ENCODE measurements at regions of chr12 and their contacts with region 1.

Region 1: GRCh38 chr12:132908145-132909044 is 21.0 kb upstream of the CHFR start:
- DNase-seq: peak; percentile 98
- ATAC-seq: peak; percentile 97
- H3K4me3 ChIP-seq: peak overlapping the region; percentile 22 to 49
- H3K27ac ChIP-seq: peak overlapping the region in 1 of 2 donors; percentile 6
- H3K4me1 ChIP-seq: no peaks in the 10 kb centered on the region
- H3K27me3 ChIP-seq: no peaks in the 10 kb centered on the region

Region 2: GRCh38 chr12:131028615-131029338 is 1879.6 kb before region 1 on chr12:
- intact Hi-C with region 1: no loop called
- DNase-seq: no peak
- ATAC-seq: no peak
- H3K4me3 ChIP-seq: no peak overlapping the region
- H3K27ac ChIP-seq: no peak overlapping the region
- H3K4me1 ChIP-seq: no peaks in the 10 kb centered on the region
- H3K27me3 ChIP-seq: no peaks in the 10 kb centered on the region

Region 3: DNA sequence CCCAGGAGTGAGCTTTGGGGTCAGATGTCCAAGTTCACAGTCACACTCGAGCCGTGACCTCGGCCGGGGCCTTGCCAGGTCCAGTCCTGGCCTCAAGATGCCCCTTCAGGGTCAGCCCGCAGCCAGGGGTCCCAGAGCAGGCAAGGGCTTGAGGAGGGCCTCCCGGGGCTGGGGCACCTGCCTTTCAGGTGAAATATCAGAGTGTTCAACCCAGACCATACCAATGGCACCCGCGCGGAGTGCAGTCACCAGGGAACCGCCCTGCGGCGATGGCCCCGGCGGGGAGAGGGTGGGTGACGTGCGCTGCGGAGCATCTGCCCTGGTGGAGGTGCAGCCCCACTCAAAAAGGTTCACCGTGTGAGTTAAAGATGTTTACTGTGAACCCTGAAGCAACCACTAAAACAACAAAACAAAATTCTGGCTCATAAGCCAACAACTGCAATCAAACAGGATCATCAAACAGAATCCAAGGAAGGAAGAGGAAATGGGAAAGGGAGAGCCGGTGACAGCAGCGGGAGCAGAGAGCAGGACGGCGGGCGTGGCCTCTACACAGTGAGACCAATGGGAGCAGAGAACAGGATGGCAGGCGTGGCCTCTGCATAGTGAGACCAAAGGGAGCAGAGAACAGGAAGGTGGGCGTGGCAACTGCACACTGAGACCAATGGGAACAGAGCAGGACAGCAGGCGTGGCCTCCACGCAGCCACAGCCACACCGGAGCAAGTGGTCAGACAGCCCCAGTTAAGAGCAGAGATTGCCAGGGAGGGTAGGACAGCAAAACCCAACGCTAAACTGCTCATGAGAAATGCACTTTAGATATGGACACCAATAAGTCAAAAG is 314.7 kb before region 1 on chr12:
- intact Hi-C with region 1: no loop called
- DNase-seq: peak; percentile 92
- ATAC-seq: peak; percentile 92
- H3K4me3 ChIP-seq: no peak overlapping the region
- H3K27ac ChIP-seq: no peak overlapping the region
- H3K4me1 ChIP-seq: no peaks in the 10 kb centered on the region
- H3K27me3 ChIP-seq: no peaks in the 10 kb centered on the region

Region 4: DNA sequence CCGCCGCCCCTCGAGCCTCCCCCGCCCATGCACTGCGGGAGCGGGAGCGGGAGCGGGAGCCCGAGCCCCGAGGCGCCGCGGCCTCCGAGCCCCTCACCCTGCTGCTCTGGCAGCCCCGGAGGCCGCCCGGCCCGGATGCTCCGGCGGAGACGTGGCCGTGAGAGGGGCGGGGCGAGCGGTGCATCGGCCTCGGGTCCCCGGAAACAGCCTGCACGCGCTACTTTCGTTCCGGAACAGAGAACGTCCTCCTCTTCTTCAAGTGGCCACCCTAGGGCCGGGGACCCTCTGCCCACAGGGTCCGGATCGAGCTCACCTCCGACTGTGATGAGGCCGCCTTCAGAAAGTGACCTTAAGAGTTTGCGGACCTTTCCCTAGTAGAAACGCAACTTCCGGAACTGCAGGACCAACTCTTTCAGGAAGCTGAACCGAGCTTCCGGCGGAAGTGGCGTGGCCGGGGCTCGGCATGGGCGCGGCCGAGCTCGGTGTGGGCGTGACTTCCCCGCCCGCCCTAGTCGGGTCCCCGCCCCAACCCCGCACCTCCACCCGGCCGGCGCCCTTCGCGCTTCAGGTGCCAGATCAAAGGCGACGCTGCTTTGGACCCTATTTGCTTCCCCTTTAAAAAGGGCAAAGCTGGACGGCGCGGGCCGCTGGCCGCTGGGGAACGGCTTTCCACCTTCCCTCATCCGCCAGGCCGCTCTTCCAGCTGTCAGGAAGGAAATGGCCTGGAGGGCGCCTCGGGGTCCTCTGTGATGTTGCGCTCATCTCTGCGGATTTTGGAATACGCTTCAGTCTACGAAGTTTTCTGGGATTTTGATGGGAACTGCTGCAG is 79.5 kb before region 1 on chr12 and contains the start of gene GOLGA3:
- intact Hi-C with region 1: loop called in 1 of 2 experiments (anchors 1 kb)
- DNase-seq: peak; percentile 96 to 98
- ATAC-seq: peak; percentile 99
- H3K4me3 ChIP-seq: peak within 1 kb of the TSS; percentile 61 to 85
- H3K27ac ChIP-seq: peak within 1 kb of the TSS; percentile 63 to 91
- H3K4me1 ChIP-seq: no peaks in the 10 kb centered on the region
- H3K27me3 ChIP-seq: no peaks in the 10 kb centered on the region
- total RNA-seq, gene GOLGA3: 83.1 to 91.2 TPM

Region 5: DNA sequence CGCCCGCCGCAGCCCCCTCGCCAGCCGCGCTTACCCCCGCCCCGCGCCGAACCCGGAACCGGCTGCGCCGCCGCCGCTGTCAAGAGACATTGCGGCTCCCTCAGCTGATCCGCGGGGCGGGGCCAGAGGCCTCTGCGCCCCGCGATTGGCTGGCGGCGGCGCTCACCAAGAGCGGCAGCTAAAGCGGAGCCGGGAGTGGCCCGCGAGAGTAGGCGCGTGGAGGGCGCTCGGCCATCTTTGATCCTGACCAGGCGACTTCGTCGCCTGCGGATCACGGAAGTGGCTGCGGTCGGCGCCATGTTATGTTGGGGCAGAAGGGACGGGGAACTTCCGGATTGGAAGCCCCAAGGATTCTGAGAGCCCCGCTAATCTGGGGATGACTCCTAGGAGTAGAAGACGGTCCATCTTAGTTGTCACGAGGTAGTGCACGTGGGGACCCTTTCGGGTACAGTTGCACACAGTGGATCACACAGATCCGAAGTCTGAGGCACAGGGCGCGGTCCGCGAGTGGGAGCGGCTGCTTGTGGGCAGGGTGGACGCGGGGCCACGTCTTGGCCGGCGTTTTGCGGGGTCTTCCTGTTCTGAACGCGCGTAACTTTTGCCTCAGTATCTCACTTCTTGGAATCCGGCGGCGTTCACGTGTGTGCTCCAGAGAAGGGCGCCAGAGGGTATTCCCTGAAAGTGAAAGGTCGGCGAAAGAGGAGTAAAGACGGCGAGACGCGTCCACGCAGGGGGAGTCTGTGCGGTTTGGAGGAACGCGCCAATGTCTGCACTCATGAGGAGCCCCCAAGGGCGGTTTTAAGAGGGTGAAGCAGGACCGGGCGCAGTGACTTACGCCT is 20.7 kb before region 1 on chr12 and contains the start of gene CHFR:
- intact Hi-C with region 1: loop called in 1 of 2 experiments (anchors 1 kb)
- DNase-seq: peak; percentile 98 to 99
- ATAC-seq: peak; percentile 100
- H3K4me3 ChIP-seq: peak within 1 kb of the TSS; percentile 81 to 98
- H3K27ac ChIP-seq: peak within 1 kb of the TSS; percentile 54 to 81
- H3K4me1 ChIP-seq: no peaks in the 10 kb centered on the region
- H3K27me3 ChIP-seq: no peaks in the 10 kb centered on the region
- total RNA-seq, gene CHFR: 53.4 to 58.7 TPM

Region 6: DNA sequence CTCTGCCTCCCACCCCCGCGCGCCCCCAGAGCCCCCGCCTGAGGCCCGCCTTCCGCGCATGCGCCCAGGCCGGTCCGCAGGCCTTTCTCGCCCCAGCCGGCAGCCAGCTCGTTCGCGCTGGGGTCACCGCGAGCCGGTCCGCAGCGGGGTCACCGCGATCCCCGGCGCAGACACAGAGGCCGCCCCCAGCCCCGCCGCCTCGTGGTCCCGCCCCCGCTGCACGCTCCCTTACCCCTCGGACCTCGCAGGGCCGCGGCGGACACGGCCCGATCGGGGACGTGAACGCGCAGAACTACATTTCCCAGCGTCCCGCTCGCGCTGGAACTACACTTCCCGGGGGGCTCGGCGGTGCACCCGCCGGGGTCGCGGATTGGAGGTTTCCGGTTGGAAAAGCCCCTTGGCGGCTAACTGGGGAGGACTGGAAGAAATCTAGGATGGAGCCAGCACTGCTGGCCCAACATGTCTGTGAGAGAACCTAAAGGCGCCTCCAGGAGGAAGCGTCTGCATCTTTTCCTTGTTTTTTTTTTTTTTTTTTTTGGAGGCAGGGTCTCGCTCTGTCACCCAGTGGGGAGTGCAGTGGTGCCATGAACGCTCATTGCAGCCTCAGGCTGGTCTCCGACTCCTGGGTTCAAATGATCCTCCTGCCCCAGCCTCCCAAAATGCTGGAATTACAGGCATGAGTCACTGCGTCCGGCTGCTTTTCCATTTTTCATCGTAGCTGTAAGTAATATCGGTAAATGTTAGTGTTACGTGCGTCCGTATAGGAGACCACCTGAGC is 47.8 kb after region 1 on chr12 and contains the start of gene ZNF605:
- intact Hi-C with region 1: loop called in 1 of 2 experiments (anchors 2 kb)
- DNase-seq: peak; percentile 94 to 97
- ATAC-seq: peak; percentile 95
- H3K4me3 ChIP-seq: peak within 1 kb of the TSS; percentile 97 to 99
- H3K27ac ChIP-seq: peak within 1 kb of the TSS; percentile 83 to 93
- H3K4me1 ChIP-seq: peaks cover 2 to 4% of the 10 kb centered on the region in 2 donors
- H3K27me3 ChIP-seq: no peaks in the 10 kb centered on the region
- total RNA-seq, gene ZNF605: 13.7 to 19.4 TPM